Astrocyte of the spinal cord (primary cell): ENCODE measurements at regions of chr12 and their contacts with region 1.

Region 1: DNA sequence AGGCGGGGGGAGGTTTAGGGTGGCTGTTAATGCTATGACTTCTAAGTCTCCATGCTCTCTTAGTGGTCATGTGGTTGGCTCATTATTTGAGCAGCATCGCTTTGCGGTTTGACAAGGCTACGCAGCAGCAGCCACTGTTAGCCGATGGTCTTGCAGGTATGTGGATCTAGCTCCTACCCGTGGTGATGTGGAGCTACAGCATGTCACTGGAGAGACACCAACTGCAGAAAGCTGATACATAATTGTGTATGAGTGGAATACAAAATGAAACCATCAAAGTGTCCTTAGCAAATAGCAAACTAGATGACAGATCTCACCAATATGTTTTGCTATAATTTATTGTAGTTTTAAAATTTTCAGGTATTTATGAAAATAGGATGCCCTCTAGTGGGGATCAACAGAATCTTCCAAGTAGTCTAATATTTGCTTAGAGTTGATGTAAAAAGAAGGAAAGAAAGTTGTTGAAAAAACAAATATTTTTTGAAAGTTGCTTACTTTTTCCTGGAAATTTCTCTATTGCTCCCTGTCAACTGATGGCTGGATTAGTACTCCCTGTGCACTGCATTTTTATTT is 94.9 kb downstream of the NAV3 start:
- DNase-seq: peak; percentile 97
- H3K4me3 ChIP-seq: no peak overlapping the region
- CTCF ChIP-seq: peak; percentile 99

Region 2: DNA sequence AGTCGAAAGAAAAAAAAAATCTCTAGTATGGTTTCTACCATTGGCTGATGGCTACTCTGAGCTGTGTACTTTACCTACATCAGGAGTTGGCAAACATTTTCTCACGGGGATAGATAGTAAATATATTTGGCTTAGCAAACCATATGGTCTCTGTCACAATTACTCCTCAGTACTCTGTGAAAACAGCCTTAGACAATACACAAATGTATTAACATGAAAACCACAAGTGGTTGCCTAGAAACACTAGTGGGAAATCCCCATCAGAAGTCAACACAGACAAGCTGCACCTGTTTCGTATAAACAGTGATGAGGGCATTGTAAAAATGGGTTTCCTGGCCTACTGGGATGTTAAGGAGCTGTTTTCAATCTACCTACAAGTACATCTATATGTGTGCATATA is 179.5 kb before region 1 on chr12:
- in situ Hi-C with region 1: loop called (anchors 25 kb)
- DNase-seq: peak; percentile 43
- H3K4me3 ChIP-seq: no peak overlapping the region
- CTCF ChIP-seq: no peak